ENCODE measurements at regions of chr7 and their contacts with region 1.

Region 1: DNA sequence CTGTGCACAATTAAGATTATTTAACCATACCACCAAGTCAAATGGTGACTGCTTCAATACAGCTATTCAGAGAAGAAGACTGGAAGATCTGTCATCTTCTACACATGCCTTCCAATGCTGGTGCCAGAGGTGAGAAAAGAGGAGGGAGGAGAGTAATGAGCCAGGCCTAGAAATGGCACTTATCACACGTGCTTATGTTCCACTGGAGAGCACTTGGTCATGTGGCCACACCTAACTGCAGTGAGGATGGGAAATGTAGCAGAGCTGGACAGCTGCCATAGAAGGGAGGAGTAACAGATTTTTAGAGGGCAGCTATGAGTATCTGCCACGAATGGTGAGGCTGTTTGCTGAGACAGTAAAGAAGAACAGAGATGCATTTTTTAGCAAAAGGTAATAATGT is 77.1 kb downstream of the MPLKIP start:
- DNase-seq: no peak
- ATAC-seq: no peak
- H3K4me3 ChIP-seq: no peak overlapping the region
- H3K4me3 Mint-ChIP-seq: no peak overlapping the region
- H3K27ac ChIP-seq: no peak overlapping the region
- H3K27ac Mint-ChIP-seq: peak overlapping the region in 6 of 9 donors; percentile 14 to 69 (median 44)
- H3K4me1 ChIP-seq: no peaks in the 10 kb centered on the region
- H3K4me1 Mint-ChIP-seq: peaks cover 4 to 22% (median 13%) of the 10 kb centered on the region in 7 donors
- H3K27me3 ChIP-seq: no peaks in the 10 kb centered on the region
- H3K27me3 Mint-ChIP-seq: no peaks in the 10 kb centered on the region

Region 2: DNA sequence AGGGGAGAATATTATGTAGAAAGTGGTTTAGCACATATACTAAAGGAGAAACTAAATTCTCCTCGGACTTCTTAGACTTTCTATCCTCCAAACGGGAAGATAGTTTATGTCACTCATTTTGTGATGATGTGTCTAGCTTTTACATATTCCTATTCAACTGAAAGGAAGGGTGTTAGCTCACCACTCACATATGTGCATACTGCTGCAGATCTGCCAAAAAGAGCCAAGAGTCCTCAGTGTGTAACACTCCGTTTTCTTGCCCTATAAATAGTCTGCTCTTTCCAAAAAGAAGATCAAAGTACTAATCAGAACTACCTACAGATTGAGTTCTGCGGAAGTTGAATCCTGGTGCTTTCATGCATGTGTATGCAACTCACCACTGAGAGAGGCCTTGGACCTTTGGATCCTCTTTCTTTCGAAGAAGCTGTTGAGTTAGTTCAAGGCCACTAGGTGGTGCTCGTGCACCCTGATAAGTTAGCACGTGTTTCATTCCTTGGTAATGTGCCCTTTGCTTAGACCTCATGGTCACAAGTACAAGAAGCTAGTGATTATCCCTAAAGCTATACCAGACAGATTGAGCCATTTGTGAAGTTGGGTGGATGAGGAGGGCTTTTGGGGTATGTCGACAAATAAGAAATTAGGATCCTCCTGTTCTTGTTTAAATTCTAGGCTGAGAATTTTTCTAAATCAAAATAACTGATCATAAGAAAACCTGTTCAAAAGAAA is 477.0 kb before region 1 on chr7:
- CTCF ChIA-PET with region 1: interaction called, 5 read pairs
- POLR2A ChIA-PET with region 1: interaction called, 3 read pairs
- intact Hi-C with region 1: loop called (anchors 1 to 2 kb)
- DNase-seq: peak; percentile 38 to 79 (median 73)
- ATAC-seq: peak; percentile 98
- H3K4me3 ChIP-seq: no peak overlapping the region
- H3K4me3 Mint-ChIP-seq: no peak overlapping the region
- H3K27ac ChIP-seq: no peak overlapping the region
- H3K27ac Mint-ChIP-seq: peak overlapping the region in 5 of 9 donors; percentile 23 to 61 (median 44)
- H3K4me1 ChIP-seq: no peaks in the 10 kb centered on the region
- H3K4me1 Mint-ChIP-seq: peaks cover 2 to 12% (median 10%) of the 10 kb centered on the region in 7 donors
- H3K27me3 ChIP-seq: no peaks in the 10 kb centered on the region
- H3K27me3 Mint-ChIP-seq: no peaks in the 10 kb centered on the region

Region 3: GRCh38 chr7:39894904-39895303 is 162.4 kb before region 1 on chr7:
- CTCF ChIA-PET with region 1: interaction called, 157 read pairs
- POLR2A ChIA-PET with region 1: interaction called, 5 read pairs
- intact Hi-C with region 1: loop called (anchors 1 kb)
- DNase-seq: no peak
- ATAC-seq: no peak
- H3K4me3 ChIP-seq: no peak overlapping the region
- H3K4me3 Mint-ChIP-seq: no peak overlapping the region
- H3K27ac ChIP-seq: no peak overlapping the region
- H3K27ac Mint-ChIP-seq: no peak overlapping the region
- H3K4me1 ChIP-seq: no peaks in the 10 kb centered on the region
- H3K4me1 Mint-ChIP-seq: peaks cover 0 to 3% (median 0%) of the 10 kb centered on the region in 7 donors
- H3K27me3 ChIP-seq: no peaks in the 10 kb centered on the region
- H3K27me3 Mint-ChIP-seq: peaks cover 0 to 15% (median 4%) of the 10 kb centered on the region in 5 donors

Region 4: GRCh38 chr7:40024048-40024447 is 33.2 kb before region 1 on chr7:
- CTCF ChIA-PET with region 1: no interaction called
- POLR2A ChIA-PET with region 1: no interaction called
- intact Hi-C with region 1: no loop called
- DNase-seq: no peak
- ATAC-seq: no peak
- H3K4me3 ChIP-seq: no peak overlapping the region
- H3K4me3 Mint-ChIP-seq: no peak overlapping the region
- H3K27ac ChIP-seq: no peak overlapping the region
- H3K27ac Mint-ChIP-seq: peak overlapping the region in 7 of 9 donors; percentile 33 to 81 (median 53)
- H3K4me1 ChIP-seq: no peaks in the 10 kb centered on the region
- H3K4me1 Mint-ChIP-seq: peaks cover 8 to 36% (median 24%) of the 10 kb centered on the region in 7 donors
- H3K27me3 ChIP-seq: no peaks in the 10 kb centered on the region
- H3K27me3 Mint-ChIP-seq: no peaks in the 10 kb centered on the region